HEK293T (cell line): ENCODE measurements at regions of chr17 and their contacts with region 1.

Region 1: DNA sequence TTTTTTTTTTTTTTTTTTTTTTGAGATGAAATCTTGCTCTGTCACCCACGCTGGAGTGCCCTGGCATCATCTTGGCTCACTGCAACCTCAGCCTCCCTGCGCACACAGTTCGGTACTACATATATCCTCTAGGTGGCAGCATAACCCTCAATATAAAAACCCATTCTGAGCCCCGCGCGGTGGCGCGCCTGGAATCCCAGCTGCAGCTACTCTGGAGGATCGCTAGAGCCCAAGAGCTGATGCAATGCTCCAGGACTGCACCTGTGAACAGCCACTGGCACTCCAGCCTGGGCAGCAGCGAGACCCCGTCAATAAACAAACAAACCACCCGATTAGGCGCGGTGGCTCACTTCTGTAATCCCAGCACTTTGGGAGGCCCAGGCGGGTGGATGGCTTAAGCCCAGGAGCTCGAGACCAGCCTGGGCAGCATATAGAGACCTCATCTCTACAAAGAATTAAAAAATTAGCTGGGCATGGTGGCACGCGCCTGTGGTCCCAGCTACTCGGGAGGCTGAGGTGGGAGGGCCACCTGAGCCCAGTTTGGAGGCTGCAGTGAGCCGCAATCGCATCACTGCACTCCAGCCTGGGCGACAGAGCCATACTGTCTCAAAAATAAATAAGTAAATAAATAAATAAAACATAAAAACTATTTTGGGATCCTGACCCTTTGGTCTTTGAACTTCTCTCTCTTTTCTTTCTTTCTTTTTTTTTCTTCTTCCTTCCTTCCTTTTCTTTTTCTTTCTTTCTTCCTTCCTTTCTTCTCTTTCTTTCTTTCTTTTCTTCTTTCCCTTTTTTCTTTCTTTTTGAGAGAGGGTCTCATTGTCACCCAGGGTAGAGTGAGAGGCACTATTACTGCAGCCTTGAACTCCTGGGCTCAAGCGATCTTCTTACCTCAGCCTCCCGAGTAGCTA is 15.4 kb upstream of the AKAP10 start:
- DNase-seq: peak; percentile 74

Region 2: GRCh38 chr17:19977311-19978208 is 15.5 kb before region 1 on chr17 and contains the start of gene AKAP10:
- CTCF ChIA-PET with region 1: interaction called, 4 read pairs
- POLR2A ChIA-PET with region 1: interaction called, 10 read pairs
- DNase-seq: peak; percentile 92

Region 3: DNA sequence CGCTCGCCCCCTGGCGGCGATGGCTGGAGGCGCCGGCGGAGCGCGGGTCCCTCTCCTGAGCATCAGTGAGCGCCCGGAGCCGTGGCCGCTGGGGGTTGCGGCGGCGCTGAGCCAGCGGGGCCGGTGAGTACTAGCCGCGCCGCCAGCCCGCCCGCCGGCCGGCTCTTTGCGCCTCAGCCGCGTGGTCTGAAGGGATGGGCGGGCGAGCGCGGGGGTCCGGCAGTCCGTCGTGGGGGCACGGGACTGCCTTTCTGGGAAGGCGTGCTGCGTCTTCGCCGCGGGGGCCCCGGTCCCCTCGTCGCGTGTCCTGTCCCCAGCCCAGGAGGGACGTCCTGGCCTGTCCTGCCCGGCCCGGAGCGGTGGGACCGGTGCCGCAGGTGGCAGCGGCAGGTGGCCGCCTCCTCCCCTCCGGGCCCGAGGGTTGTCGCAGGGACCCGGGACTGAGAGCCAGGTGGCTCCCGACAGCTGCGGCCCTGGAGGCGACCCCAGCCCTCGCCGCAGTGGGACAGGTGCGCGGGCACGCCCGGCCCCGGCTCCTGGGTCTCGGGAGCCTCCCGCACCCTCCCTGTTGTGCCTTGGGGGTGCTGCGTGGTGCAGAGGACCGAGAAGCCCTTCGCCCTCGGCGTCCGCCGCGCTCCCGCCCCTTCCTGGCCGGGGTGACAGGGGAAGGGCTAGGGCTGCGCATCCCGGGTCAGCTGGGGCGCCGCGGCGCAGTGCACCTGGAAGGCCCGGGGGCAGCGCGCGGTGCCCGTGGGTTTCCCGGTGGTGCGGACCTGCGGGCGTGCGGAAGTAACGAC is 16.4 kb after region 1 on chr17 and contains the start of gene SPECC1:
- CTCF ChIA-PET with region 1: interaction called, 18 read pairs
- POLR2A ChIA-PET with region 1: interaction called, 17 read pairs
- DNase-seq: peak; percentile 92

Region 4: DNA sequence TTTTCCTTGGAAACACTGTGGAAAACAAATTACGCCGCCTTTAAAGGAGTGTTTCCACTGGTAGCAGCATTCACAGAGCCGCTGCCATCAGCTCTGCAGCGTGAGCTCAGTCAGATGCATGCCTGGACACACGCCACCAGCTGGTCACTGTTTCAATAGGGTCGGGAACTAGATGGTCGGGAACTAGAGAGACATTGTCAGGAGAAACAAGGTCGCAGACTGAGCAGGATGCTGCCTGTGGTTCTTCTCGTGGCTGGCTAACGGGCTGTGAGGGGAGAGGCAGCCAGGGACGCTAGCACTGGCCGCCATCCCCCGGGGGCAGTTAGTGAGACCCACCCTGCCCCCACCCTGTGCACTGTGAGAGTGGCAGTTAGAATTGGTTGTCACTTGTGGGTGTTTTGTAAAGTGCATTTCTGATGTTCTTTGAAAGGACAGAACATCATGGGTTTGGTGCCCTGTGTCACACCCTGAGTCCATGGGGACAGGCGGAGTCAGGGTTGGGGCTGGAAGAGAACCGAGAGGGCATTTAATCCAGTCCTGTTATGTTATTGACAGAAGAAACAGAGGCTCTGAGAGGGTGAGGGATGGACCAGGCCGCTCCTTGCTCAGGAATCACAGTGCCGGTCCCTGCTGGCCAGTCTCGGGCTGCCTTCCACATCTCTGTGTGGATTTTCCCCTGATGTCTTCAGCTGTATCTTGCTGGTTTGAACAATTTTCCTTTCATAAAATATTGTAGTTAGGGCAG is 102.5 kb after region 1 on chr17:
- CTCF ChIA-PET with region 1: interaction called, 15 read pairs
- POLR2A ChIA-PET with region 1: interaction called, 8 read pairs
- DNase-seq: peak; percentile 70

Region 5: GRCh38 chr17:20116683-20117309 is 123.7 kb after region 1 on chr17:
- CTCF ChIA-PET with region 1: interaction called, 17 read pairs
- POLR2A ChIA-PET with region 1: interaction called, 5 read pairs
- DNase-seq: peak; percentile 47